GM10248 (cell line): ENCODE measurements at regions of chr6 and their contacts with region 1.

Region 1: GRCh38 chr6:30483677-30484279 is 5.5 kb upstream of the HLA-E start:
- DNase-seq: peak; percentile 55
- CTCF ChIP-seq: peak; percentile 70

Region 2: GRCh38 chr6:30500421-30501355 is 16.9 kb after region 1 on chr6:
- CTCF ChIA-PET with region 1: interaction called, 16 read pairs
- POLR2A ChIA-PET with region 1: interaction called, 3 read pairs
- DNase-seq: no peak
- CTCF ChIP-seq: no peak

Region 3: DNA sequence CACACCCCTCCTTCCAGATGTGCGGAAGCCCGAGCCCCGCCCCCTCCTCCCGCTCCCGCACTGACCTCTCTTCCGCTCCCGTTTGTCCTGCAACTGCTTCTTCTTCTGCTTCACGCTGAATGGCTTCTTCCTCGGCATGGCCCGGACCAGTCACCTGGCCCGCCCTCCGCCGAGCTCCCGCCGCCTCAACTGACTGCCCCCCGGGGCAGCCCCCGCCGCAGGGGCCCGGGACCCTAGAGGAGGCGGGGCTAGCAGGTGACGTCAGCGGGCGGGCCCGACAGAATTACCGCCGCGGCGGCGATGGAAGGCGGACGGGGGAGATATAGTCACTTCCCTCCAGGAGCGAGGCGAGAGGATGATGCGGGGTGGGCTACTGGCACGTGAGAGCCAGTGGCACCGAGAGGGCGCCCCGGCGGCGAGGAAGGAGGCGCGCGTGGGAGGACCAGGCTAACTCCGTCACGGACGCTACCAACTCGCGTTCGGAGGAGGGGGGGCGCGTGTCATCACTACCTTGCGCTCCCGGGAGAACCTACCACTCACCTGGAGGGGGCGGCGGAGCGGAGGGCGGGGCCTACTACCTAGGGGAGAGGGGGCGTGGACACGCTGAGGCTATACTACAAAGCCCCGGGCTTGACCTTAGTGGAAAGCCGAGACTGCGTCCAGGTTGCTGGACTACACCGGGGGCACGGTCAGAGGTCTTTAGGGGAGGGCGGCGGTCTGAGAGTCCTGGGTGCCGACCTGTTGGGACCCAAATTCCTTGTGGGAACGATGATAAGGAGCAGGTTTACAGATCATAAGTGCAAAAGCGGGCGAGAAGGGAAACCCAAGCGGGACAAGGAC is 72.5 kb after region 1 on chr6 and contains the start of gene GNL1:
- CTCF ChIA-PET with region 1: interaction called, 10 read pairs
- POLR2A ChIA-PET with region 1: no interaction called
- DNase-seq: peak; percentile 96
- CTCF ChIP-seq: no peak

Region 4: DNA sequence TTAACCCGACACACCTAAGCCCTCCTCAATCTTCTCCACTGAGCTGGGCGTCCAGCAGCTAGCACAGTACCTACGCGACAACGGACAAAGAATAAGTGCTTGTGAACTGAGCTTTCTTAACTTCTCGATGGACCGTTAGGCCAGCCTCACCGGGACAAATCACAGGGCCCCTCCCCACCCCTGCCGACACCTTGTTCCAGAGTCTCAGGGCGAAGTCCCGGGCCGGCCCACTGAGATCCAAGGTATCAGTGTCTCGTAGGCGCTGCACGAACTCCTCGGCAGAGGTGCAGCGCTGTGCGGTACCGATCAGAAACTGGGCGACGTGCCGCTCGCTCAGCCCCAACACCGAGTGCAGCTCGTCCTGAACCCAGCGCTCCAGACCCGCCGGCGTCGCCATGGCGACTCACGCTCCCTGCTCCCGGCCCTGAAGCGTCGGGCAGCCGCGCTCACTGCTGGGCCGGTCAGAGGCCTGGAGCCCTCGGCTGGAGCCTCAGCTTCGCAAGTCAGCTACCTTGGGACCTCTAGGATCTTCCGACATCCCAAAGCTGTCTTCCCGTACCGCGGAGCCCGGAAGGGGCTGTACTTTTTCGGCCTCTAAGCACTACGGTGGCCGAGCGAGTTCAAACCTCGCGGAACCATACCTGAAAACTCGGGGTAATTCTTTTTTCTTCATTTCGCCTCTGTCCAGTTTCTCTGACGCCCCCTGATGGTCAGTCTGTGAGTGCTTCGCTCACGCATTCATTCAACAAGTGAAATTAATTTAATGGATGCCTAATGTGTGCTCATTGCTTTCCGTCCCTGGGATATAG is 188.9 kb after region 1 on chr6 and contains the start of gene DHX16:
- CTCF ChIA-PET with region 1: interaction called, 16 read pairs
- POLR2A ChIA-PET with region 1: no interaction called
- DNase-seq: peak; percentile 92
- CTCF ChIP-seq: peak; percentile 91